K562 (cell line): ENCODE measurements at regions of chr14 and their contacts with region 1.

Region 1: GRCh38 chr14:93939304-93940229 is 12.4 kb downstream of the FAM181A start:
- DNase-seq: peak; percentile 60 to 76 (median 72)
- ATAC-seq: peak; percentile 96
- H3K4me3 ChIP-seq: no peak overlapping the region
- H3K27ac ChIP-seq: no peak overlapping the region
- H3K4me1 ChIP-seq: 0 out of 5 replicates have a peak, but pooled peaks cover 0 to 2% of the 10 kb centered on the region in 2 experiments
- H3K27me3 ChIP-seq: peaks cover 0 to 20% of the 10 kb centered on the region in 2 experiments; a peak in 2 of 5 replicates
- CTCF ChIP-seq: peak; percentile 32 to 88 (median 65); a peak in 5 of 6 replicates
- EP300 ChIP-seq: no peak
- POLR2A ChIP-seq: no peak
- RAD21 ChIP-seq: peak; percentile 38 to 60; a peak in 3 of 4 replicates

Region 2: DNA sequence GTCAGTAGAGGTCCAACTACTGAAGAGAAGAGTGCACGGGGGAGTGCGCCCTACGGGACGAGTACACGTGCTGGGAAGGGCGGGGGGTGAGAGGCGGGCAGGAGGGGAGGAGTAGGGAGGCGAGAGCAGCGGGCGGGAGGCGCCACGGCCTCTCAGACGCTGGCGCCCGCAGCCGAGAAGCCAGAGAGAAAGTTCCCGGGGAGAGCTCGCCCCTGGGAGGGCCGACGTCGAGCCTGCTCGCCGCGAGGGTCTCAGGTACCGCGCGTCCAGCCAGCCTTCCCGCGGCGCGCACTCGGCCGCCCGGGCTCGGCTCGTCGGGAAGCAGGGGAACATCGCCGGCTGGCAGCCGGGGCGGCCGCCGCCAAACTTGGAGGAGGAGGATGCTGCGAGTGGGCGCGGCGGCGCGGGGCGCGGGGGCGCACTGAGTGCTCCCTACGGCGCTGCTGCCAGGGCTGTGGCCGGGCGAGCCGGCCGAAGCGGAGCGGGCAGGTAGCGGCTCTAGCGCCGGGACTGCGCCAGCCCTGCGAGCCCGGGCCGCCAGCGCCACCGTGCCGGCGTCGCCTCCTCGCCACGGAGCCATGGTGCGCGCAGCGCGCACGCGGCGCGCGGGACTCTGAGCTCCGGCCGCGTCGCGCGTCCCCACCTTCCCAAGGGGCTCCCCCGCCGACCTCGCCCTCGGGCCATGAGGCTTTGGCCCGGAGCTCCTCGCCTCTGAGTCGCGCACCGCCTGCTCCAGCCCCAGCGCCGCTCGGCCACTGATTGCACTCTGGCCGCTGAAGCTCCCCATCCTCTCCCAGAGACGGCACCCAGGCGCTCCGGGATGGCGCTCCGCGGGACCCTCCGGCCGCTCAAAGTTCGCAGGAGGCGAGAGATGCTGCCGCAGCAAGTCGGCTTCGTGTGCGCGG is 1616.3 kb before region 1 on chr14 and contains the start of gene SLC24A4:
- CTCF ChIA-PET with region 1: no interaction called
- POLR2A ChIA-PET with region 1: no interaction called
- in situ Hi-C with region 1: no loop called
- intact Hi-C with region 1: no loop called
- DNase-seq: no peak
- ATAC-seq: no peak
- H3K4me3 ChIP-seq: no peak within 1 kb of the TSS
- H3K27ac ChIP-seq: no peak within 1 kb of the TSS
- H3K4me1 ChIP-seq: no peaks in the 10 kb centered on the region; a peak in 1 of 5 replicates
- H3K27me3 ChIP-seq: peaks cover 0 to 35% of the 10 kb centered on the region in 2 experiments; a peak in 3 of 5 replicates
- CTCF ChIP-seq: no peak
- EP300 ChIP-seq: no peak
- POLR2A ChIP-seq: no peak
- RAD21 ChIP-seq: no peak
- polyA plus RNA-seq, gene SLC24A4: not detected

Region 3: GRCh38 chr14:93772263-93772662 is 167.3 kb before region 1 on chr14:
- CTCF ChIA-PET with region 1: no interaction called
- POLR2A ChIA-PET with region 1: no interaction called
- in situ Hi-C with region 1: no loop called
- intact Hi-C with region 1: no loop called
- DNase-seq: no peak
- ATAC-seq: no peak
- H3K4me3 ChIP-seq: no peak overlapping the region
- H3K27ac ChIP-seq: no peak overlapping the region
- H3K4me1 ChIP-seq: no peaks in the 10 kb centered on the region
- H3K27me3 ChIP-seq: peaks cover 0 to 17% of the 10 kb centered on the region in 2 experiments; a peak in 2 of 5 replicates
- CTCF ChIP-seq: no peak
- EP300 ChIP-seq: no peak
- POLR2A ChIP-seq: no peak
- RAD21 ChIP-seq: no peak

Region 4: GRCh38 chr14:94001501-94002396 is 62.2 kb after region 1 on chr14:
- CTCF ChIA-PET with region 1: interaction called, 9 read pairs
- POLR2A ChIA-PET with region 1: no interaction called
- in situ Hi-C with region 1: loop called (anchors 5 kb)
- intact Hi-C with region 1: loop called (anchors 5 kb)
- DNase-seq: peak; percentile 51 to 61 (median 58)
- ATAC-seq: peak; percentile 91
- H3K4me3 ChIP-seq: no peak overlapping the region
- H3K27ac ChIP-seq: no peak overlapping the region
- H3K4me1 ChIP-seq: peaks cover 0 to 6% of the 10 kb centered on the region in 2 experiments; a peak in 2 of 5 replicates
- H3K27me3 ChIP-seq: peaks cover 0 to 18% of the 10 kb centered on the region in 2 experiments; a peak in 3 of 5 replicates
- CTCF ChIP-seq: peak; percentile 81 to 88 (median 85)
- EP300 ChIP-seq: no peak
- POLR2A ChIP-seq: no peak
- RAD21 ChIP-seq: peak; percentile 46 to 74

Region 5: DNA sequence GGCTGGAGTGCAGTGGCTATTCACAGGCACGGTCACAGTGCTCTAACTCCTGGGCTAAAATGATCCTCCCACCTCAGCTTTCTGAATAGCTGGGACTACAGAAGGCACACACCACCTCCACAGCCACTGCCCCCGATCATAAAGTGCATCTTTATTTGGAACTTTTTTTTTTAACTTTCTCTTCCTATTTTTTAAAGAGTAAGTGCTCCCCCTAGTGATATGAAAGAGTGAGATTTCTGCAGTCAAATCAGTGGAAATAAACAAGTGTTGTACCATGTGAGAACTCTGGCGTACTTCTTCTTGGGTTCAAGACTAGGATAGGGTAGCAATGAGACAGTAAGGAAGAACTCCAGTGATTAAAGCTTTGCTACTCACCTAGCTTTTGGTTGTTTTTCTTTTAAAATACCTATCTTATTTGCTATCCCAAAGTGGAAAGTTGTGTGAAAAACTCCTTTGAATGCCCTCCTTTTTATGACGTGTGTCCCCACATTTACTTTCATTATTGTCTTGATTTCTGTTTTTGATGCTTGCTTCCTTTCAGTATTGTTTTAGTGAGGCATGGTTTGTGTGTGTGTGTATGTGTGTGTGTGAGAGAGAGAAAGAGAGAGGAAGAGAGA is 241.2 kb after region 1 on chr14:
- CTCF ChIA-PET with region 1: no interaction called
- POLR2A ChIA-PET with region 1: no interaction called
- in situ Hi-C with region 1: no loop called
- intact Hi-C with region 1: loop called (anchors 2 kb)
- DNase-seq: peak in 2 of 4 experiments; percentile 12 to 29
- ATAC-seq: peak; percentile 69
- H3K4me3 ChIP-seq: no peak overlapping the region
- H3K27ac ChIP-seq: no peak overlapping the region
- H3K4me1 ChIP-seq: no peaks in the 10 kb centered on the region
- H3K27me3 ChIP-seq: no peaks in the 10 kb centered on the region; a peak in 2 of 5 replicates
- CTCF ChIP-seq: peak; percentile 29 to 61 (median 32); a peak in 3 of 6 replicates
- EP300 ChIP-seq: no peak
- POLR2A ChIP-seq: no peak
- RAD21 ChIP-seq: peak; percentile 25 to 58; a peak in 3 of 4 replicates